Activated CD4-positive, alpha-beta memory T cell treated with anti-CD3 and anti-CD28 coated beads for 36 hours (primary cell): ENCODE measurements at regions of chr6 and their contacts with region 1.

Region 1: GRCh38 chr6:25842526-25843277 is 10.8 kb upstream of the SLC17A1 start:
- DNase-seq: peak; percentile 32
- H3K4me3 Mint-ChIP-seq: no peak overlapping the region
- H3K27ac Mint-ChIP-seq: no peak overlapping the region
- H3K4me1 Mint-ChIP-seq: no peaks in the 10 kb centered on the region
- H3K27me3 Mint-ChIP-seq: peaks cover 23% of the 10 kb centered on the region

Region 2: DNA sequence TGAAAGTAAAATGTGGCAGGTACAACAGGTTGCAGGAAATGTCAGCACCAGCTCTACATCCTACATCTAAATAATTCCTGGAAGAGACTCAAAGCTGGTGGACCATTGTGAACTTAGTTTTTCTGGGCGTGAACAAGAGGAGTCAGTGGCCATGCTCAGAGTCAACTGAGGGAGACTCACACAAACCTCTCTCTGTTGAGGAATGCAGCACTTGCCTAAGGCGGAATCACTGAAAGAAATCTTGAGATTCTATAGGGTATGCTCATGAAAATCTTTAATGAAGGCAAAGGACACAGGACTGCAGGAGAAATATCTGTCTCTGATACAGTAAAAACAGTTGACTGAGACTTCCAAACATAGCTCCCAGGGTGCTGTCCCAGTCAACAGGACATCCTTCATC is 65.7 kb before region 1 on chr6:
- CTCF ChIA-PET with region 1: interaction called, 3 read pairs
- POLR2A ChIA-PET with region 1: no interaction called
- intact Hi-C with region 1: loop called (anchors 1 kb)
- DNase-seq: no peak
- H3K4me3 Mint-ChIP-seq: no peak overlapping the region
- H3K27ac Mint-ChIP-seq: no peak overlapping the region
- H3K4me1 Mint-ChIP-seq: peaks cover 19% of the 10 kb centered on the region
- H3K27me3 Mint-ChIP-seq: peaks cover 2% of the 10 kb centered on the region

Region 3: GRCh38 chr6:25829375-25829774 is 13.3 kb before region 1 on chr6:
- CTCF ChIA-PET with region 1: no interaction called
- POLR2A ChIA-PET with region 1: interaction called, 3 read pairs
- intact Hi-C with region 1: loop called (anchors 1 kb)
- DNase-seq: no peak
- H3K4me3 Mint-ChIP-seq: no peak overlapping the region
- H3K27ac Mint-ChIP-seq: no peak overlapping the region
- H3K4me1 Mint-ChIP-seq: peaks cover 9% of the 10 kb centered on the region
- H3K27me3 Mint-ChIP-seq: peaks cover 26% of the 10 kb centered on the region

Region 4: DNA sequence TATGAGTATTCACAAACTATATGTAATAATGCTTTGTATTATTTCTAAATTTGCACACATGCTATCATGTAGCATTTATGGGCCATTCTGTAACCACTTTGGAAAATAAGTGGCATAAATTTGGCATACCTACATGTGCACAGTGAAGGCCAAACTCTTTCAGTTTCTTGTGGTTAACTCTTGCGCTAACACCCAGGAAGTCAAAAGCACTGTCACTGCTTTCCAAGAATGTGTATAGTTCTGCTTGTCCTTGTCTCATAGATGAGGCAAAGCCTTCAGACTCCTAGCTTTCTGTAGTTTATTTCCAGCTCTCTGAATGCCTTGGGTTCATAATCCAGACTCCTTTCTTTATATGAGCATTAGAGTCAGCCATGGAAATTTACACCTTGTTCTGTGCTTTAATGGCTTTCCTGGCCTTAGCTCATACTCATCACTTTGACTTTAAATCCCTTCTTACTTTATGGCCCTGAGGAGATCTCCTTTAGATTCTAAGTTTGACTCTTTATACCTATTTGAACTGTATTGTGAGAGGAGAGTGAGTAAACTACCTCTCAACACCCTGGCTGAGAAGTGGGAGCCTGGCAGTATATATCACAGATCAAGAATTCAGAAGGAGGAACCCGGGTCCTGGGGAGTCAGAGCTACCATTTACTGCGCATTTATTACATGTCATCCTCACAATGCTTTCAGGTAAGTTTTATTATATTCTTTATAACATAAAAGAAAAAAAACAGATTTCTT is 32.3 kb after region 1 on chr6:
- CTCF ChIA-PET with region 1: no interaction called
- POLR2A ChIA-PET with region 1: no interaction called
- intact Hi-C with region 1: loop called (anchors 5 kb)
- DNase-seq: no peak
- H3K4me3 Mint-ChIP-seq: no peak overlapping the region
- H3K27ac Mint-ChIP-seq: no peak overlapping the region
- H3K4me1 Mint-ChIP-seq: peaks cover 28% of the 10 kb centered on the region
- H3K27me3 Mint-ChIP-seq: peaks cover 6% of the 10 kb centered on the region